CD4-positive, alpha-beta T cell (primary cell): ENCODE measurements at regions of chr4 and their contacts with region 1.

Region 1: GRCh38 chr4:89898304-89898716 is 3.7 kb downstream of the MMRN1 start:
- DNase-seq: peak in 1 of 14 experiments; percentile 10
- ATAC-seq: no peak
- H3K4me3 ChIP-seq: no peak overlapping the region
- H3K4me3 Mint-ChIP-seq: no peak overlapping the region
- H3K27ac ChIP-seq: no peak overlapping the region
- H3K27ac Mint-ChIP-seq: no peak overlapping the region
- H3K4me1 ChIP-seq: peaks cover 8% of the 10 kb centered on the region
- H3K4me1 Mint-ChIP-seq: peaks cover 25% of the 10 kb centered on the region
- H3K27me3 ChIP-seq: no peaks in the 10 kb centered on the region
- H3K27me3 Mint-ChIP-seq: no peaks in the 10 kb centered on the region
- CTCF ChIP-seq: no peak

Region 2: GRCh38 chr4:89158884-89159503 is 739.3 kb before region 1 on chr4:
- CTCF ChIA-PET with region 1: no interaction called
- POLR2A ChIA-PET with region 1: no interaction called
- intact Hi-C with region 1: loop called (anchors 2 to 5 kb)
- DNase-seq: peak in 4 of 14 experiments; percentile 4 to 62 (median 46)
- ATAC-seq: peak; percentile 69
- H3K4me3 ChIP-seq: no peak overlapping the region
- H3K4me3 Mint-ChIP-seq: no peak overlapping the region
- H3K27ac ChIP-seq: no peak overlapping the region
- H3K27ac Mint-ChIP-seq: no peak overlapping the region
- H3K4me1 ChIP-seq: no peaks in the 10 kb centered on the region
- H3K4me1 Mint-ChIP-seq: no peaks in the 10 kb centered on the region
- H3K27me3 ChIP-seq: no peaks in the 10 kb centered on the region
- H3K27me3 Mint-ChIP-seq: peaks cover 3% of the 10 kb centered on the region
- CTCF ChIP-seq: peak; percentile 87

Region 3: GRCh38 chr4:89226665-89227574 is 671.4 kb before region 1 on chr4:
- CTCF ChIA-PET with region 1: interaction called, 4 read pairs
- POLR2A ChIA-PET with region 1: no interaction called
- intact Hi-C with region 1: loop called (anchors 1 to 5 kb)
- DNase-seq: peak; percentile 62 to 88 (median 72)
- ATAC-seq: peak; percentile 94
- H3K4me3 ChIP-seq: no peak overlapping the region
- H3K4me3 Mint-ChIP-seq: peak overlapping the region; percentile 18
- H3K27ac ChIP-seq: no peak overlapping the region
- H3K27ac Mint-ChIP-seq: no peak overlapping the region
- H3K4me1 ChIP-seq: no peaks in the 10 kb centered on the region
- H3K4me1 Mint-ChIP-seq: peaks cover 5% of the 10 kb centered on the region
- H3K27me3 ChIP-seq: no peaks in the 10 kb centered on the region
- H3K27me3 Mint-ChIP-seq: no peaks in the 10 kb centered on the region
- CTCF ChIP-seq: peak; percentile 91

Region 4: GRCh38 chr4:89434364-89434988 is 463.8 kb before region 1 on chr4:
- CTCF ChIA-PET with region 1: no interaction called
- POLR2A ChIA-PET with region 1: no interaction called
- intact Hi-C with region 1: loop called (anchors 1 to 2 kb)
- DNase-seq: peak in 3 of 14 experiments; percentile 63 to 72 (median 71)
- ATAC-seq: peak; percentile 77
- H3K4me3 ChIP-seq: no peak overlapping the region
- H3K4me3 Mint-ChIP-seq: no peak overlapping the region
- H3K27ac ChIP-seq: no peak overlapping the region
- H3K27ac Mint-ChIP-seq: no peak overlapping the region
- H3K4me1 ChIP-seq: peaks cover 7% of the 10 kb centered on the region
- H3K4me1 Mint-ChIP-seq: peaks cover 12% of the 10 kb centered on the region
- H3K27me3 ChIP-seq: no peaks in the 10 kb centered on the region
- H3K27me3 Mint-ChIP-seq: no peaks in the 10 kb centered on the region
- CTCF ChIP-seq: peak; percentile 90

Region 5: DNA sequence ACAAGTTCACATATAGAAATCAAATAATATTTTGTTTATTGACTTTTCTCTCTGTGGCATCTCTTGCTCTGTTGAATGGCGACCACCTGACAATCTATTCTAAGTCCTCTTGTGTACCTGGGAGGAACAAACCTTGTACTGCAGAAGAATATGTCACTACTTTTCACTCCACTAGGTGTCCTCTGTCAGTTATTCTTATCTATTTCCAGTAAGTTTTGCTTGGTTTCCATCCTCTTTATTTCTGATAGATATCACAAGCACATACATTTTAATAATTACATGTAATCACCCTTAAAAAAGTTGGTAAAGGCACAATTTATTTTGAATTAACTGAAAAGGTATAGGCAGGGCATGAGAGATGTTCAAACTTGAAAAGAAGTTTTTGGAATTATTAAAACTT is 299.7 kb before region 1 on chr4:
- CTCF ChIA-PET with region 1: no interaction called
- POLR2A ChIA-PET with region 1: no interaction called
- intact Hi-C with region 1: loop called in 1 of 2 experiments (anchors 1 kb)
- DNase-seq: peak in 2 of 14 experiments; percentile 10 to 11
- ATAC-seq: no peak
- H3K4me3 ChIP-seq: no peak overlapping the region
- H3K4me3 Mint-ChIP-seq: no peak overlapping the region
- H3K27ac ChIP-seq: no peak overlapping the region
- H3K27ac Mint-ChIP-seq: no peak overlapping the region
- H3K4me1 ChIP-seq: no peaks in the 10 kb centered on the region
- H3K4me1 Mint-ChIP-seq: no peaks in the 10 kb centered on the region
- H3K27me3 ChIP-seq: no peaks in the 10 kb centered on the region
- H3K27me3 Mint-ChIP-seq: no peaks in the 10 kb centered on the region
- CTCF ChIP-seq: no peak

Region 6: DNA sequence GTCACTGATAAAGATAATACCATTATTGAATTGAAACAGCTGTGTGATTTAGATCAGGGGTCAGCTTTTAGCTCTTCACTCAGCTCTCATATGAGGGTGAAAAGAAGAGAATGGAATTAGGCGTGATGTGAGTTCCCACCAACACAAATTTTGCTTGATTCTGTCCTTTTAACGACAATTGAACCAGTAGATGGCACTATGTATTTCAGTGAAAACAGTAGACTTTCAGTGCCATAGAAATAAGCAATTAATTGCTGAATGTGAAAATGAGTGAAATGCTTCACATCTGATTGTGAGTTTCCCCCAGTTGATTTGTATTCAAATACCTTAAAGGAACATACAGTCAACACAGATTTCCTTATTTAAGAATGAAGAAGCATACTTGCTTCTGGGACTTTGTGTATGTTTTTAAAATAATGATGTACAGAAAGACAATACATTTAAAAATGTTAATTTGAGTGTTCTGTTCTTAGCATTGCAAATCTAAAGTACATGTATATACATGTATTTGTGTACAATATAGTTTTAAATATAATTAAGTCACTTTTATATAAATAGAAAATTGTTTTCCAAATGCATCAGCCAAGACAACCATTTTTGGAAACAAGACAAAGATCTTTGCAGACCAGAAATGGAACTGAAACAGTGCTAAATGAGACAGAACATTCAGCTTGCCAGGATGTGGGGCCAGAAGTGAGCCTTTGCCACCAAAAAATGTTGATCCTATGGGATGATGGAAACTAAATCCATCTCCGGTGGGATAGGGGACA is 240.2 kb before region 1 on chr4:
- CTCF ChIA-PET with region 1: no interaction called
- POLR2A ChIA-PET with region 1: no interaction called
- intact Hi-C with region 1: loop called (anchors 2 kb)
- DNase-seq: peak in 3 of 14 experiments; percentile 9 to 13 (median 13)
- ATAC-seq: no peak
- H3K4me3 ChIP-seq: no peak overlapping the region
- H3K4me3 Mint-ChIP-seq: no peak overlapping the region
- H3K27ac ChIP-seq: no peak overlapping the region
- H3K27ac Mint-ChIP-seq: no peak overlapping the region
- H3K4me1 ChIP-seq: no peaks in the 10 kb centered on the region
- H3K4me1 Mint-ChIP-seq: no peaks in the 10 kb centered on the region
- H3K27me3 ChIP-seq: no peaks in the 10 kb centered on the region
- H3K27me3 Mint-ChIP-seq: no peaks in the 10 kb centered on the region
- CTCF ChIP-seq: peak; percentile 34

Region 7: DNA sequence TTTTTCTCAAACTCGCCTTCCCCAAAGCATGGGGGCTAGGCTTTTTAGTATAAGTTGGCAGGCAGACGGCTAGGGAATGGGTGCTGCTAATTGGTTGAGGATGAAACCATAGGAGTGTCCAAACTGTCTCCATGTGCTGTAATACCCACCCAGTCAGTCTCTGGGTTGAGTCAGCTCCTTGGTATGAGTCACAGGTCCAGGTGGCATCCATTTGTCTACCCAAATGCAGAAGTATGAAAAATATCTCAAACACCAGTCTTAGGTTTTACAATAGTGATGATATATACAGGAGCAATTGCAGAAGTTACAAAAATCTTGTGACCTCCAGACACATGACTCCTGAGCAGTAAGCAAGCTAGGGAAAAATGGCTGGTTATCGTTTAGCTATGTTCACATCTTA is 201.5 kb after region 1 on chr4:
- CTCF ChIA-PET with region 1: no interaction called
- POLR2A ChIA-PET with region 1: no interaction called
- intact Hi-C with region 1: no loop called
- DNase-seq: peak in 3 of 14 experiments; percentile 2 to 54 (median 46)
- ATAC-seq: no peak
- H3K4me3 ChIP-seq: no peak overlapping the region
- H3K4me3 Mint-ChIP-seq: no peak overlapping the region
- H3K27ac ChIP-seq: no peak overlapping the region
- H3K27ac Mint-ChIP-seq: no peak overlapping the region
- H3K4me1 ChIP-seq: no peaks in the 10 kb centered on the region
- H3K4me1 Mint-ChIP-seq: no peaks in the 10 kb centered on the region
- H3K27me3 ChIP-seq: no peaks in the 10 kb centered on the region
- H3K27me3 Mint-ChIP-seq: no peaks in the 10 kb centered on the region
- CTCF ChIP-seq: no peak